GM12878 (cell line): ENCODE measurements at regions of chr9 and their contacts with region 1.

Region 1: GRCh38 chr9:109469646-109470358 is 28.3 kb downstream of the PTPN3 start:
- DNase-seq: peak; percentile 30
- ATAC-seq: peak; percentile 99
- H3K4me3 ChIP-seq: no peak overlapping the region
- H3K27ac ChIP-seq: no peak overlapping the region
- H3K4me1 ChIP-seq: no peaks in the 10 kb centered on the region
- H3K27me3 ChIP-seq: no peaks in the 10 kb centered on the region
- CTCF ChIP-seq: peak; percentile 92 to 96 (median 94); a peak in 5 of 6 replicates
- EP300 ChIP-seq: no peak
- POLR2A ChIP-seq: no peak
- RAD21 ChIP-seq: peak; percentile 98

Region 2: DNA sequence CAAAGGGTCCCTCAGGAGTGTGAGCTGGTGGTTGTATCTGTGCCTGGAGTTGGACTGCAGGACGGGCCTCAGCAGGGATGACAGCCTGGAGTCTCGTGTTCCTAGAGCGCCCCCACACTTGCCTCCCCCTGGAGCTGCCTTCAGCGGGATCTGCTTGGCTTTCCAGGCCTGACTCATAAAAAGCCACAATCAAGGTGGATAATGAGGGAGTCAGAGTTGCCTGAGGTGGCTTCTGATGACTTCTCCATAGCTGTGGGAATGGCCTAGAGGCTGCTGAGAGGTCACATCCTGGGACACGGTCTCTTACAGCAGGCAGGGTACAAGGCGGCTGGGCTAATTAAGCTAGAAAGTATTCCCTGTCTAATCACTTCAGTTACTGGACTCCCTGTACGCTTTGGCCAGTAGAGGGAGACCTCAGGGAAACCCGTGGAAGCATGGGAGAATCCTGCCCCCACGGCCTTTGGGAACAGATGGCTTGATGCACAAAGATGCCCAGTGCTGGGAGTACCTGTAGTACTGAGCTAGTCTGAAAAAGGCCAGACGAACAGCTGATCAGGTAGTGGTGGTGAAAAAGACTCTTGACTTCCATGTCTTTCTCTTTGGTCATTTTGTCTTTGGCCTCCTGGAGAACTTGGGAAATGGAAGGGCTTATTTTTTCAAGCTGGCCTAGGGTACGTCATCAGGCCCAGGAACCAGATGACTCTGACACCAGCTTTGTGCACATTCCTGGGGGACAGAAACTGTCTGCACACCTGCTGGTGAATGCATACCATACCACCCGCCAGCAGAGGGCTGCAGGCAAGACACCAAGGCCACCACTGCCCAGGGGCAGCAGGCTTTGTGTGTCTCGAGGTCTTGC is 286.6 kb before region 1 on chr9:
- CTCF ChIA-PET with region 1: interaction called, 13 read pairs
- POLR2A ChIA-PET with region 1: no interaction called
- RAD21 ChIA-PET with region 1: interaction called, 8 read pairs
- SMC1A ChIA-PET with region 1: interaction called, 5 read pairs
- in situ Hi-C with region 1: no loop called
- intact Hi-C with region 1: loop called (anchors 2 kb)
- DNase-seq: no peak
- ATAC-seq: peak; percentile 84
- H3K4me3 ChIP-seq: no peak overlapping the region
- H3K27ac ChIP-seq: no peak overlapping the region
- H3K4me1 ChIP-seq: peaks cover 9% of the 10 kb centered on the region
- H3K27me3 ChIP-seq: peaks cover 2 to 3% of the 10 kb centered on the region in 2 experiments; a peak in 1 of 4 replicates
- CTCF ChIP-seq: peak; percentile 46 to 64 (median 54)
- EP300 ChIP-seq: no peak
- POLR2A ChIP-seq: no peak
- RAD21 ChIP-seq: peak; percentile 50

Region 3: GRCh38 chr9:109320742-109321448 is 148.9 kb before region 1 on chr9 and contains the start of gene EPB41L4B:
- CTCF ChIA-PET with region 1: interaction called, 6 read pairs
- POLR2A ChIA-PET with region 1: no interaction called
- RAD21 ChIA-PET with region 1: interaction called, 4 read pairs
- SMC1A ChIA-PET with region 1: interaction called, 9 read pairs
- in situ Hi-C with region 1: no loop called
- intact Hi-C with region 1: loop called (anchors 2 kb)
- DNase-seq: peak; percentile 19
- ATAC-seq: peak; percentile 100
- H3K4me3 ChIP-seq: no peak within 1 kb of the TSS; the same call in 1 of the 2 replicates
- H3K27ac ChIP-seq: no peak within 1 kb of the TSS
- H3K4me1 ChIP-seq: no peaks in the 10 kb centered on the region
- H3K27me3 ChIP-seq: peaks cover 5 to 6% of the 10 kb centered on the region in 2 experiments
- CTCF ChIP-seq: peak; percentile 83 to 92 (median 90)
- EP300 ChIP-seq: no peak
- POLR2A ChIP-seq: no peak
- RAD21 ChIP-seq: peak; percentile 80
- polyA plus RNA-seq, gene EPB41L4B: 0.04 to 0.13 TPM

Region 4: GRCh38 chr9:109371374-109371773 is 98.4 kb before region 1 on chr9:
- CTCF ChIA-PET with region 1: no interaction called
- POLR2A ChIA-PET with region 1: no interaction called
- RAD21 ChIA-PET with region 1: no interaction called
- SMC1A ChIA-PET with region 1: no interaction called
- in situ Hi-C with region 1: no loop called
- intact Hi-C with region 1: no loop called
- DNase-seq: no peak
- ATAC-seq: no peak
- H3K4me3 ChIP-seq: no peak overlapping the region
- H3K27ac ChIP-seq: no peak overlapping the region
- H3K4me1 ChIP-seq: peaks cover 10% of the 10 kb centered on the region
- H3K27me3 ChIP-seq: no peaks in the 10 kb centered on the region; a peak in 1 of 4 replicates
- CTCF ChIP-seq: no peak
- EP300 ChIP-seq: no peak
- POLR2A ChIP-seq: no peak
- RAD21 ChIP-seq: no peak

Region 5: DNA sequence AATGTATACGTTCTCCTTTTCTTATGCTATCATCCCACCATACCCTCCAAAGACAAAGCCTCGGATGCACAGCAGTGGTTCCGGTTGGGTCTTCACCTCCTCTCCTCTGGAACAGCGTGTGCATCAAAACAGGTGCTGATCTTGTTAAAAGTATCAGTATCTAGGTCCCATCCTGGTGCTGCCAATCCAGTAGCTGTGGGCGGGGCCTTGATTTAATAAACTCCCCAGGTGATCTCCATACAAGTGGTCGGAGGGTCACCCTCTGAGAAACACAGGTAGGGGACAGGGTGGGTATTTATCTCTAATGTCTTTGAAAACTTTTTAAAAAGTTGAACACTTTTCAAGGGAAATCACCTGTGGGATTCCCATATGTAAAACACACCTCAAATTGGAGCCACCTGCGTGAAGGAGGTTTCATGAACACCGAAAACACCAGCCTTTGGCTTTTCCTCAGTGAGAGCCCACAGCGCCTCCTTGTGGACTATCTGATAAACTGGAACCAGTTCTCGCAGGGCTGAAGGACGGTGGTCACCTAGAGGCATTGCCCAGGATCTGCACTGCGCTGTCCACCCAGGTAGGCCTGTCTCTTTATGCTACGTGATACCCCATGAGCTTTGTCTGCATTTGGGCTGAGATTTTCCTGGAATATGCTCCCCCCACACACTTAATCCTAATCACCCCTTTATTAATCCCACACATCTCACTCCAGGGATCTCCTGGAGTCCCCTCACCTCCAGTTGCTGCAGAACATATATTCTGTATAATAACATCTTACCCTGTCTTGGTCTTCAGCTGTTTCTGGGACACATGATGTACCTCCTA is 68.4 kb before region 1 on chr9:
- CTCF ChIA-PET with region 1: interaction called, 10 read pairs
- POLR2A ChIA-PET with region 1: interaction called, 3 read pairs
- RAD21 ChIA-PET with region 1: interaction called, 13 read pairs
- SMC1A ChIA-PET with region 1: interaction called, 7 read pairs
- in situ Hi-C with region 1: no loop called
- intact Hi-C with region 1: loop called (anchors 1 kb)
- DNase-seq: no peak
- ATAC-seq: peak; percentile 75
- H3K4me3 ChIP-seq: no peak overlapping the region
- H3K27ac ChIP-seq: 0 out of 2 replicates have a peak overlapping the region, but pooled peaks have one; percentile 10
- H3K4me1 ChIP-seq: peaks cover 30% of the 10 kb centered on the region
- H3K27me3 ChIP-seq: no peaks in the 10 kb centered on the region
- CTCF ChIP-seq: peak; percentile 83 to 91 (median 85)
- EP300 ChIP-seq: no peak
- POLR2A ChIP-seq: no peak
- RAD21 ChIP-seq: peak; percentile 92

Region 6: DNA sequence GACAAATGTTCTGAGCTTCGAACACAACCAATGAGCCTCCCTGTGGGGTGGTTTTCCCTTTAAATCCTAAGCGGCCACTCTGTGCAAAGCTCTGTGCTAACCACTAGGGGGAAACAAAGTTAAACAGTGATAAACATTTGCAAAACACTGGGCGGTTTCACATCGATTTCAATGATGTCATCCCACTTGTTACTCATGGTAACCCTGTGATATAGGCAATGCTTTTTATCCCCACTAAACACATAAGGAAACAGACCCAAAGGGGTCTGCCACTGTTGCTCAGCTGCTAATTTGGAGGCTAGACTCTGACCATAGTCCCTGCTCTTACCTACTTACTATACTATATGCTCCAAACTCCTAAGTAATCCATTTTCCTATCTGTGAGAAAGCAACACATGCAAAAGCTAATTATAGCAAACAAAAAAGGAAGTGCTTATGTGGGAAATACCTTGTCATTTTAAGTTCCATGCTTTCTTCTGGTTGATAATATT is 29.0 kb before region 1 on chr9:
- CTCF ChIA-PET with region 1: interaction called, 234 read pairs
- POLR2A ChIA-PET with region 1: interaction called, 5 read pairs
- RAD21 ChIA-PET with region 1: interaction called, 135 read pairs
- SMC1A ChIA-PET with region 1: interaction called, 131 read pairs
- in situ Hi-C with region 1: no loop called
- intact Hi-C with region 1: loop called (anchors 1 kb)
- DNase-seq: no peak
- ATAC-seq: peak; percentile 89
- H3K4me3 ChIP-seq: no peak overlapping the region
- H3K27ac ChIP-seq: no peak overlapping the region
- H3K4me1 ChIP-seq: peaks cover 19% of the 10 kb centered on the region
- H3K27me3 ChIP-seq: no peaks in the 10 kb centered on the region
- CTCF ChIP-seq: peak; percentile 73 to 86 (median 85)
- EP300 ChIP-seq: 0 out of 4 replicates have a peak, but pooled peaks of 1 of the 2 experiments have one; percentile 28
- POLR2A ChIP-seq: no peak
- RAD21 ChIP-seq: peak; percentile 84

Region 7: DNA sequence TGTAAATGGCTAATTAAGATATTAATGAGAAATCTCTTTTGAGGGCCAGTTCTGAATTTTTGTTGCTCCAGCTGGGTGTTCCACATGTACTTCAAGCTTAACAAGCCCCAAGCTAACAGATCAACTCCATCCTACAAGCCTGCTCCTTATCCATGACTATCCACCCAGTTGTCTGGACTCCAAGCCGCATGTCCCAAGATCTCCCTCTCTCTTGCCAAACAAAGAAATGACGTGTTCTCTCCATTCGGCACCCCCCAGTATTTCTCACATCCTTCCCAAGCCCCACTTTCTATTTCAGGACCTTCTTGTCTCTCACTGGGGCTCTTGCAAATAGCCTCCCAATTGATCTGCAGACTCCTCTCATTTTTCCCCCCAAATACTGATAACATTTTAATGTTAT is 44.1 kb after region 1 on chr9:
- CTCF ChIA-PET with region 1: interaction called, 13 read pairs
- POLR2A ChIA-PET with region 1: no interaction called
- RAD21 ChIA-PET with region 1: interaction called, 3 read pairs
- SMC1A ChIA-PET with region 1: interaction called, 5 read pairs
- in situ Hi-C with region 1: no loop called
- intact Hi-C with region 1: no loop called
- DNase-seq: no peak
- ATAC-seq: no peak
- H3K4me3 ChIP-seq: no peak overlapping the region
- H3K27ac ChIP-seq: no peak overlapping the region
- H3K4me1 ChIP-seq: no peaks in the 10 kb centered on the region
- H3K27me3 ChIP-seq: no peaks in the 10 kb centered on the region; a peak in 1 of 4 replicates
- CTCF ChIP-seq: no peak
- EP300 ChIP-seq: no peak
- POLR2A ChIP-seq: no peak
- RAD21 ChIP-seq: no peak